ENCODE measurements at regions of chr17 and their contacts with region 1.

Region 1: GRCh38 chr17:49230636-49231562 is at the start of gene PHOSPHO1:
- DNase-seq: peak; percentile 82
- H3K4me3 Mint-ChIP-seq: peak within 1 kb of the TSS; percentile 87
- H3K27ac Mint-ChIP-seq: no peak within 1 kb of the TSS
- H3K4me1 Mint-ChIP-seq: peaks cover 24% of the 10 kb centered on the region
- H3K27me3 Mint-ChIP-seq: peaks cover 37% of the 10 kb centered on the region
- total RNA-seq, gene PHOSPHO1: 0.37 TPM in 1 of 2 replicates, not detected in the other

Region 2: DNA sequence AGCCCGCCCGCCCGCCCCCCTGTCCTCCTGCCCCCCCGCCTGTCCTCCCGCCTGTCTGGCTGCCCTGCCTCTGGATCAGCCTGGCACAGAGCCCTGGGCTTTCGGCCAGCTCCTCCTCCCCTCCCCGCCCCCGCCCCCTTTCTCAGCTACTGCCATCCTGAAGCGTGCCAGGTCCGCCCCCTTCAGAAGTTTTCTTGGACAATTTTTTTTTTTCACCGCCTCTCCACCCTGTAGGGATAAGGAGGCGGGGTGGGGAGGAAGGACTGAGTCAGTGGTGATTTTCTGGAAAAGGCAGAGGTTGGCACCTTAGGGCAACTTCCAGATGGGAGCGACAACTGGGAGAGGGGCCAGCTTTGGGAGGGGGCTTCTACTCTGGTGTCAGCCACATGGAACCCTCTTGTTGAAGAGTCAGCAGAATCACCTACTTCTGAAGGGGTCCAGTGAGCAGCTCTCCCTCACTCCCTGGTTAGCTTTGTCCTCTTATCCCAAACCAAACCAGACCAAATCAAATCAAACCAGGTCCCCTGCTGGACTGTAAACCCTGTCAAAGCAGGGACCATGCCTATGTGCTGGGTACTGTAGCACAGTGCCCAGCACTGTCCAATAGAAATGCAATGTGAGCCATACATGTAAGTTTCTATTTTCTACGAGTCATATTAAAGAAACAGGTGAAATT is 214.0 kb before region 1 on chr17:
- intact Hi-C with region 1: no loop called
- DNase-seq: no peak
- H3K4me3 Mint-ChIP-seq: no peak overlapping the region
- H3K27ac Mint-ChIP-seq: no peak overlapping the region
- H3K4me1 Mint-ChIP-seq: no peaks in the 10 kb centered on the region
- H3K27me3 Mint-ChIP-seq: peaks cover 39% of the 10 kb centered on the region

Region 3: GRCh38 chr17:49146620-49147306 is 84.1 kb before region 1 on chr17:
- intact Hi-C with region 1: no loop called
- DNase-seq: no peak
- H3K4me3 Mint-ChIP-seq: no peak overlapping the region
- H3K27ac Mint-ChIP-seq: no peak overlapping the region
- H3K4me1 Mint-ChIP-seq: no peaks in the 10 kb centered on the region
- H3K27me3 Mint-ChIP-seq: peaks cover 13% of the 10 kb centered on the region

Region 4: DNA sequence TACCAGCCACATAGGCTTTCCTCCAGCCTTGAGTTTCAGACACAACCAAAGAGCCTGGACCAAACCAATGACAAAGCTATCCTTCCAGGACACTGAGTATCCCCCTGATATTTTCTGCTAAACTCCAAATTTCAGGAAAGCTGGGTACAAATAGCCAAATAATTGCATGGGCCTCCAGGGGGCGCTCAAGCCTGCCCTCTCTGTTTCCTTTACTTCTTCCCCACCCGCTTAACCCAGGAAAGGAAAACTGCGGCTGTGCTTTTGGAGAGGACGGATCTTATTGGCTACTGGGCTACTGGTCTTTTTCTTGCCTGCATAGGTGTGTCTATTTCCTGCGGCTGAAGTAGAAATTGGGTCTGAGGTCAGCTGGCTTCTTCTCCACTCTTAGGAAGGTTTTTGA is 50.6 kb before region 1 on chr17:
- intact Hi-C with region 1: loop called (anchors 1 kb)
- DNase-seq: peak; percentile 32
- H3K4me3 Mint-ChIP-seq: no peak overlapping the region
- H3K27ac Mint-ChIP-seq: no peak overlapping the region
- H3K4me1 Mint-ChIP-seq: peaks cover 5% of the 10 kb centered on the region
- H3K27me3 Mint-ChIP-seq: peaks cover 8% of the 10 kb centered on the region

Region 5: DNA sequence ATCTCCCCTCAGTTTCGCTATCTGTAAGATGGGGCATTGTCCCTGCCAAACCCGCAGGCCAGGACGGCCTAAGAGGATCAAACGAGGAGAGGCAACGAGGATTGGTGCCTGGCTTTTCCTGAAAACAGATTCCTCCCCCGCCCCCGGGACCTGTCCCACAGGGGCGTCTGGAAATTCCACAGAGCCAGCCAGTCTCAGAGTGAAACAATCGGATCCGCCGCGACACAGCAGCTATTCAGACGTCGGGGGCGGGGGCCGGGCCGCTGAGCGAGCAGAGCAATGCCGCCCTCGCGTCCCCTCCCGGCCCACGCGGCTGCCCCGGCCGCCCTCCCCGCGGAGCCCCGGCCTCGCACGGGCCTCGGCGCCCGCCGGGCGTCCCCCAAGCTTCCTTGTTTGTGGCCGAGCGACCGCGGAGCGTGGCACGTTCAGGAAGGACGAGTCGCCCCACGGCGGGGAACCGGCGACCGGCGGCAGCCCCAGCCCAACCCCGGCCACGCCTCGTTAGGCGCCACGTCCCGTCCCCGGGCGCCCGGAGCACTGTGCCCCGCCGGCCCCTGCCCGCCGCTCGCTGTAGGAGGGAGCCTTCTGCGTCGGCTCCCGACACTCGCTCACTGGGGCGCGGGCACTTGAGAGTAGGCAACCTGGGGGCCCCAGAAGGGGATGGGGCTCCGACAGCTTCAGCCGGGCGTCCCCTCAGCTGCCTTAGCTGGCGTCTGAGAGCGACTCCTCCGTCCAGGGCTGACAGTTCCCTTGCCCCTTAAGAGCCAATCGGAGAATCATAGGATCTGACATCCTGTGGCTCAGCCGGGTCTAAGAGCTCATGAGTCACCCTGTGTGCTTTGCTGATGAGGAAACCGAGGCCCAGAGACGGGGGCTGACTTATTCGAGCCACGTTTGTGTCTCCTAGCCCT is 29.4 kb after region 1 on chr17:
- intact Hi-C with region 1: loop called (anchors 1 kb)
- DNase-seq: peak; percentile 19
- H3K4me3 Mint-ChIP-seq: peak overlapping the region; percentile 77
- H3K27ac Mint-ChIP-seq: peak overlapping the region; percentile 61
- H3K4me1 Mint-ChIP-seq: peaks cover 9% of the 10 kb centered on the region
- H3K27me3 Mint-ChIP-seq: peaks cover 24% of the 10 kb centered on the region

Region 6: GRCh38 chr17:49390548-49391324 is 159.8 kb after region 1 on chr17:
- intact Hi-C with region 1: loop called (anchors 2 kb)
- DNase-seq: no peak
- H3K4me3 Mint-ChIP-seq: no peak overlapping the region
- H3K27ac Mint-ChIP-seq: peak overlapping the region; percentile 83
- H3K4me1 Mint-ChIP-seq: peaks cover 71% of the 10 kb centered on the region
- H3K27me3 Mint-ChIP-seq: no peaks in the 10 kb centered on the region

Region 7: DNA sequence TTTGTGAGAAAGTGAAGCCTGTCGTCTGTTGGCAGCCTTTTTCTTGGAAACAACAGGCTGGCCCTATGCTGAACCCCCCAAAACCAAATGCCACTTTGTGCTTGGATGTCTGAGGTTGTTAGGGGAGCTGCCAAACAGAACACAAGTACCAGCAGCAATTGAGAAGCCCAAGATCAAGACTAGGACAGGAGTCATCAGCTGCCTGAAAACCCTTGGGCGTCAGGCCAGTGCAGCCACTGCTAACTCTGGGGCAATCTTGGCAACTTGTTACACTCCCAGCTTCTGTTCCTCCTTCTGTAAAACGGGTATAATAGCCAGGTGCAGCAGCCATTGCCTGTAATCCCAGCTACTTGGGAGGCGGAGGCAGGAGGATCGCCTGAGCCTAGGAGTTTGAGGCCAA is 1175.7 kb after region 1 on chr17:
- intact Hi-C with region 1: loop called (anchors 5 kb)
- DNase-seq: no peak
- H3K4me3 Mint-ChIP-seq: no peak overlapping the region
- H3K27ac Mint-ChIP-seq: no peak overlapping the region
- H3K4me1 Mint-ChIP-seq: no peaks in the 10 kb centered on the region
- H3K27me3 Mint-ChIP-seq: peaks cover 25% of the 10 kb centered on the region